Heart right ventricle (tissue), 16 donors: ENCODE measurements at regions of chr5 and their contacts with region 1.

Region 1: GRCh38 chr5:94749042-94749441 is 130.6 kb downstream of the SLF1 start:
- DNase-seq: no peak
- ATAC-seq: no peak
- H3K4me3 ChIP-seq: no peak overlapping the region
- H3K27ac ChIP-seq: no peak overlapping the region
- H3K4me1 ChIP-seq: peaks cover 0 to 7% (median 0%) of the 10 kb centered on the region in 9 donors
- H3K27me3 ChIP-seq: no peaks in the 10 kb centered on the region
- CTCF ChIP-seq: no peak

Region 2: GRCh38 chr5:94731471-94731870 is 17.6 kb before region 1 on chr5:
- intact Hi-C with region 1: loop called in 1 of 10 experiments (anchors 1 kb)
- DNase-seq: no peak
- ATAC-seq: no peak
- H3K4me3 ChIP-seq: no peak overlapping the region
- H3K27ac ChIP-seq: no peak overlapping the region
- H3K4me1 ChIP-seq: peaks cover 0 to 5% (median 0%) of the 10 kb centered on the region in 9 donors
- H3K27me3 ChIP-seq: no peaks in the 10 kb centered on the region
- CTCF ChIP-seq: no peak